Mammary epithelial cell (primary cell): ENCODE measurements at regions of chr15 and their contacts with region 1.

Region 1: GRCh38 chr15:89714775-89715174 is 24.2 kb downstream of the WDR93 start:
- DNase-seq: no peak
- H3K4me3 ChIP-seq: no peak overlapping the region
- H3K27ac ChIP-seq: no peak overlapping the region
- H3K4me1 ChIP-seq: no peaks in the 10 kb centered on the region
- H3K27me3 ChIP-seq: no peaks in the 10 kb centered on the region
- CTCF ChIP-seq: no peak

Region 2: GRCh38 chr15:89642106-89642505 is 72.7 kb before region 1 on chr15:
- CTCF ChIA-PET with region 1: no interaction called
- dilution Hi-C with region 1: no loop called
- in situ Hi-C with region 1: no loop called
- intact Hi-C with region 1: no loop called
- DNase-seq: no peak
- H3K4me3 ChIP-seq: no peak overlapping the region
- H3K27ac ChIP-seq: no peak overlapping the region
- H3K4me1 ChIP-seq: no peaks in the 10 kb centered on the region
- H3K27me3 ChIP-seq: no peaks in the 10 kb centered on the region
- CTCF ChIP-seq: no peak

Region 3: GRCh38 chr15:89654847-89655805 is 59.6 kb before region 1 on chr15 and contains the start of gene KIF7:
- CTCF ChIA-PET with region 1: no interaction called
- dilution Hi-C with region 1: loop called (anchors 5 kb)
- in situ Hi-C with region 1: no loop called
- intact Hi-C with region 1: no loop called
- DNase-seq: peak; percentile 19
- H3K4me3 ChIP-seq: peak within 1 kb of the TSS; percentile 44 to 60 (median 54)
- H3K27ac ChIP-seq: no peak within 1 kb of the TSS
- H3K4me1 ChIP-seq: peaks cover 9% of the 10 kb centered on the region
- H3K27me3 ChIP-seq: no peaks in the 10 kb centered on the region
- CTCF ChIP-seq: no peak
- total RNA-seq, gene KIF7: 4.4 to 10.2 TPM